ENCODE measurements at regions of chr11 and their contacts with region 1.

Region 1: GRCh38 chr11:63710476-63711217 is 29.3 kb downstream of the RTN3 start:
- DNase-seq: peak in 3 of 4 experiments; percentile 24 to 69 (median 39)
- ATAC-seq: peak; percentile 93
- H3K4me3 ChIP-seq: no peak overlapping the region
- H3K27ac ChIP-seq: no peak overlapping the region
- H3K4me1 ChIP-seq: peaks cover 3 to 10% of the 10 kb centered on the region in 2 experiments; a peak in 2 of 5 replicates
- H3K27me3 ChIP-seq: no peaks in the 10 kb centered on the region
- CTCF ChIP-seq: peak; percentile 25 to 66 (median 58); a peak in 4 of 6 replicates
- EP300 ChIP-seq: no peak
- POLR2A ChIP-seq: no peak
- RAD21 ChIP-seq: peak; percentile 48 to 74

Region 2: DNA sequence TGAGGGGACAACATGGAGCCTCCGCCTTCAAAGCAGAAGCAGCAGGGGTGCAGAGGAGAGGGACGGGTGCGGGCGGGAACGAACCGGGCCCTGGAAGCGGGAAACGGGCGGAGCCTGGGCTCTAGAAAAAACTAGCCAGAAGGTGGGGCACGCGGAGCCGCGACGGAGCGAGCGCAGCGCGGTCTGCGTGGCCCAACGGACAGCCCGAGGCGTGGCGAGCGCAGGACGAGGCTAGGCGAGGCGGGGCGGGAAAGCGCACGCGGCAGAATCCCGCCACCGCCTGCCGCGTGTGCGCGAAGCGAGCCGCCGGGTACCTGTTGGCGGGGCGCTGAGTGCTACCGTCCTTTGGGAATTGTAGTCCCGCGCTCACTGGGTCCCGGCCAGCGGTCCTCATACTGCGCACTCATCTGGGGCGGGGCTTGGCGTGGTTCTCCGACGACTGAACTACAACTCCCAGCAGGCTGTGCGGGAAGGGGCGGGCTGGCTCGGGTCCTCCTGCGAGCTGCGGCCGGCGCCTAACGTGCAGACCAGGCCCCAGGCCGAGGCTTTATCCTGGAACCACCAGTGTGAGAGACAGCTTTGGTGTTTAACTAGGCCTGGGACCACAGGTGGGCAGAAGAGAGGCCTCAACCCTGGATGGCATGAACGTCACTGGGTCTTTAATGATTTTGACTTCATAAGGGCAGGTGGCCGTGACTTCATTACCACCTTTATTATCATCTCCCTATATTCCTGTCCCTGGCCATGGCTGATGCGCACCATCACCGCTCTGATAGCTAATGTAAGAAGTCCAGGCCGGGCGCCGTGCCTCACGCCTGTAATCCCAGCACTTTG is 39.1 kb before region 1 on chr11 and contains the start of gene ATL3:
- CTCF ChIA-PET with region 1: no interaction called
- POLR2A ChIA-PET with region 1: no interaction called
- in situ Hi-C with region 1: no loop called
- intact Hi-C with region 1: loop called (anchors 2 kb)
- DNase-seq: peak; percentile 92 to 99 (median 95)
- ATAC-seq: peak; percentile 97
- H3K4me3 ChIP-seq: peak within 1 kb of the TSS; percentile 72
- H3K27ac ChIP-seq: peak within 1 kb of the TSS; percentile 95
- H3K4me1 ChIP-seq: peaks cover 16 to 29% of the 10 kb centered on the region in 2 experiments; a peak in 4 of 5 replicates
- H3K27me3 ChIP-seq: no peaks in the 10 kb centered on the region
- CTCF ChIP-seq: peak in 2 of 3 experiments; percentile 13 to 29; a peak in 3 of 6 replicates
- EP300 ChIP-seq: peak; percentile 45
- POLR2A ChIP-seq: peak; percentile 66; the same call in 1 of the 2 replicates
- RAD21 ChIP-seq: peak; percentile 31 to 33
- polyA plus RNA-seq, gene ATL3: 23.5 to 34.2 TPM

Region 3: DNA sequence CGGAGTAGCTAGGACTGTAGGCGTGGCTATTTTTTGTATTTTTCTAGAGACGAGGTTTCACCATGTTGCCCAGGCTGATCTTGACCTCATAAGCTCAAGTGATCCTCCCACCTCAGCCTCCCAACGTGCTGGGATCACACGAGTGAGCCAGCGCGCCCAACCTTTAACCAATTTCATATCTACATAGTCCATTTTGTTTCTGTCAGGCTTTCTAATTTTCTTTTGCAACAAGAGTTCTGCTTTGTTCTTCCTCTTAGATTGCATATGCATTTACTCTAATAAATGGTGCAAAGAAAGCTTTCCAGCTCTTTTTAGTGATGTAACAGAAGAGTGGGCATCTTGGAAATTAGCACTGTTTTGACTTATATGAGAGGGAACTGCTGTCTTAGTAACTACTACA is 16.1 kb before region 1 on chr11:
- CTCF ChIA-PET with region 1: no interaction called
- POLR2A ChIA-PET with region 1: interaction called, 13 read pairs
- in situ Hi-C with region 1: no loop called
- intact Hi-C with region 1: no loop called
- DNase-seq: no peak
- ATAC-seq: no peak
- H3K4me3 ChIP-seq: no peak overlapping the region
- H3K27ac ChIP-seq: 0 out of 3 replicates have a peak overlapping the region, but pooled peaks have one; percentile 20
- H3K4me1 ChIP-seq: peaks cover 4 to 15% of the 10 kb centered on the region in 2 experiments; a peak in 4 of 5 replicates
- H3K27me3 ChIP-seq: no peaks in the 10 kb centered on the region
- CTCF ChIP-seq: no peak
- EP300 ChIP-seq: no peak
- POLR2A ChIP-seq: no peak
- RAD21 ChIP-seq: no peak

Measured in K562 (cell line).